SK-N-SH (cell line): ENCODE measurements at regions of chr1 and their contacts with region 1.

Region 1: DNA sequence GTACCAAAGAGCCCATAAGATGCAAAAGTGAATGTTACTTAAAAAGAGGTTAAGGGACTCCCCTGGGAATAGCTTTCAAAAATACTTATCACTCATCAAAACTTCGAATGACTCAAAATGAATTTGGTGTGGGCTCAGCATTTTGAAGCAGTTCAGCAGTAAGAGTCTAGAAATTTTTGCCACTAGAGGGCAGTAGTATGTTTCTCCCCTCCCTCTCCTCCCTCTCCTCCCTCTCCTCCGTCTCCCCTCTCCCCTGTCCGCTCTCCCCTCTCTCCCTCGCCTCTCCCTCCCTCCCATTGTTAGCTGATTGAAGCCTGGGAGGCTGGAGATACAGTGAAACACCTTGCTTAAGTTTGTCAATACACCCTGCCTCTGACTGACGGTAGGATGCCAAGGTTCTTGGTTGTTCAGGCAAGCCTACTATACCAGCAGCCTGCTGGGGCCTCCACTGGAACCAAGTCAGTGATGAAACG is 70.8 kb upstream of the TENT5C start:
- DNase-seq: peak; percentile 56
- H3K4me3 ChIP-seq: no peak overlapping the region; a peak in 1 of 4 replicates
- H3K27ac ChIP-seq: no peak overlapping the region
- H3K4me1 ChIP-seq: no peaks in the 10 kb centered on the region
- H3K27me3 ChIP-seq: no peaks in the 10 kb centered on the region
- CTCF ChIP-seq: peak; percentile 68
- EP300 ChIP-seq: no peak
- RAD21 ChIP-seq: peak; percentile 69

Region 2: GRCh38 chr1:117546467-117546866 is 11.4 kb after region 1 on chr1:
- CTCF ChIA-PET with region 1: interaction called, 29 read pairs
- POLR2A ChIA-PET with region 1: no interaction called
- DNase-seq: no peak
- H3K4me3 ChIP-seq: no peak overlapping the region
- H3K27ac ChIP-seq: no peak overlapping the region
- H3K4me1 ChIP-seq: peaks cover 0 to 5% of the 10 kb centered on the region in 2 experiments; a peak in 1 of 4 replicates
- H3K27me3 ChIP-seq: no peaks in the 10 kb centered on the region
- CTCF ChIP-seq: no peak
- EP300 ChIP-seq: no peak
- RAD21 ChIP-seq: no peak

Region 3: GRCh38 chr1:117565745-117566455 is 30.9 kb after region 1 on chr1:
- CTCF ChIA-PET with region 1: interaction called, 17 read pairs
- POLR2A ChIA-PET with region 1: no interaction called
- DNase-seq: peak; percentile 21
- H3K4me3 ChIP-seq: no peak overlapping the region
- H3K27ac ChIP-seq: no peak overlapping the region
- H3K4me1 ChIP-seq: peaks cover 0 to 21% of the 10 kb centered on the region in 2 experiments; a peak in 2 of 4 replicates
- H3K27me3 ChIP-seq: peaks cover 9% of the 10 kb centered on the region; the same call in 1 of the 2 replicates
- CTCF ChIP-seq: no peak
- EP300 ChIP-seq: no peak
- RAD21 ChIP-seq: no peak